CD14-positive monocyte (primary cell): ENCODE measurements at regions of chr1 and their contacts with region 1.

Region 1: GRCh38 chr1:41618091-41618825 is 133.8 kb upstream of the EDN2 start:
- DNase-seq: peak; percentile 9 to 35 (median 10)
- H3K4me3 ChIP-seq: no peak overlapping the region
- H3K4me3 Mint-ChIP-seq: peak overlapping the region; percentile 34 to 71
- H3K27ac ChIP-seq: peak overlapping the region in 1 of 2 donors; percentile 27
- H3K27ac Mint-ChIP-seq: peak overlapping the region in 5 of 7 donors; percentile 11 to 70 (median 44)
- H3K4me1 ChIP-seq: peaks cover 23 to 25% of the 10 kb centered on the region in 2 donors
- H3K4me1 Mint-ChIP-seq: peaks cover 41% of the 10 kb centered on the region
- H3K27me3 ChIP-seq: no peaks in the 10 kb centered on the region
- H3K27me3 Mint-ChIP-seq: peaks cover 0 to 3% (median 0%) of the 10 kb centered on the region in 3 donors
- CTCF ChIP-seq: no peak

Region 2: GRCh38 chr1:41404308-41404761 is 213.9 kb before region 1 on chr1:
- intact Hi-C with region 1: loop called in 1 of 2 experiments (anchors 5 kb)
- DNase-seq: peak in 1 of 3 donors; percentile 37
- H3K4me3 ChIP-seq: no peak overlapping the region
- H3K4me3 Mint-ChIP-seq: no peak overlapping the region
- H3K27ac ChIP-seq: no peak overlapping the region
- H3K27ac Mint-ChIP-seq: no peak overlapping the region
- H3K4me1 ChIP-seq: peaks cover 0 to 5% of the 10 kb centered on the region in 2 donors
- H3K4me1 Mint-ChIP-seq: peaks cover 5% of the 10 kb centered on the region
- H3K27me3 ChIP-seq: peaks cover 0 to 3% of the 10 kb centered on the region in 2 donors
- H3K27me3 Mint-ChIP-seq: peaks cover 12 to 36% (median 22%) of the 10 kb centered on the region in 3 donors
- CTCF ChIP-seq: no peak